ENCODE measurements at regions of chr11 and their contacts with region 1.

Region 1: GRCh38 chr11:63738720-63739360 is 29.7 kb downstream of the ZFTA start:
- H3K4me3 ChIP-seq: no peak overlapping the region
- H3K27ac ChIP-seq: no peak overlapping the region
- H3K4me1 ChIP-seq: no peaks in the 10 kb centered on the region
- CTCF ChIP-seq: no peak

Region 2: DNA sequence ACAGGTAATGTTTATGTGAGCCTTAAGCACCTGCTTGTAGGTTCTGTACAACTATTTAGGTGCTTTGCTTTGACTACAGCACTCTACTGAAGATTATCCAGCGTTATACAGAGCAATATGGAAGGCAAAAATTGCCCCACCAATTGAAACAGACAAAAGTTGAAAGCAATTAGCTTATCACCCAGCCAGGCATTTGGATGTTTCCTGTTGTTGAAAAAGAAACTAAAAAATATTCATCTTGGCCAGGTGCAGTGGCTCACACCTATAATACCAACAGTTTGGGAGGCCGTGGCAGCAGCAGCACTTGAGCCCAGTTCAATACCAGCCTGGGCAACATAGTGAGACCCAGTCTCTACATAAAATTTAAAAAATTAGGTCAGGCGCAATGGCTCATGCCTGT is 86.2 kb before region 1 on chr11:
- CTCF ChIA-PET with region 1: interaction called, 10 read pairs
- POLR2A ChIA-PET with region 1: no interaction called
- H3K4me3 ChIP-seq: no peak overlapping the region
- H3K27ac ChIP-seq: no peak overlapping the region
- H3K4me1 ChIP-seq: no peaks in the 10 kb centered on the region
- CTCF ChIP-seq: no peak

Region 3: GRCh38 chr11:63671322-63672155 is 67.3 kb before region 1 on chr11 and contains the start of gene ATL3:
- CTCF ChIA-PET with region 1: interaction called, 13 read pairs
- POLR2A ChIA-PET with region 1: interaction called, 4 read pairs
- H3K4me3 ChIP-seq: peak within 1 kb of the TSS; percentile 47
- H3K27ac ChIP-seq: peak within 1 kb of the TSS; percentile 19; the same call in 1 of the 2 replicates
- H3K4me1 ChIP-seq: no peaks in the 10 kb centered on the region
- CTCF ChIP-seq: no peak

Region 4: GRCh38 chr11:63710476-63711217 is 28.2 kb before region 1 on chr11:
- CTCF ChIA-PET with region 1: interaction called, 14 read pairs
- POLR2A ChIA-PET with region 1: no interaction called
- H3K4me3 ChIP-seq: no peak overlapping the region
- H3K27ac ChIP-seq: no peak overlapping the region
- H3K4me1 ChIP-seq: peaks cover 2% of the 10 kb centered on the region; the same call in 1 of the 2 replicates
- CTCF ChIP-seq: no peak

Measured in HEK293 (cell line).